A673 (cell line): ENCODE measurements at regions of chr17 and their contacts with region 1.

Region 1: GRCh38 chr17:41738077-41738735 is 3.8 kb upstream of the HAP1 start:
- DNase-seq: peak; percentile 72
- H3K4me3 ChIP-seq: no peak overlapping the region
- H3K27ac ChIP-seq: no peak overlapping the region
- H3K4me1 ChIP-seq: no peaks in the 10 kb centered on the region
- H3K27me3 ChIP-seq: peaks cover 26% of the 10 kb centered on the region
- CTCF ChIP-seq: peak; percentile 78

Region 2: DNA sequence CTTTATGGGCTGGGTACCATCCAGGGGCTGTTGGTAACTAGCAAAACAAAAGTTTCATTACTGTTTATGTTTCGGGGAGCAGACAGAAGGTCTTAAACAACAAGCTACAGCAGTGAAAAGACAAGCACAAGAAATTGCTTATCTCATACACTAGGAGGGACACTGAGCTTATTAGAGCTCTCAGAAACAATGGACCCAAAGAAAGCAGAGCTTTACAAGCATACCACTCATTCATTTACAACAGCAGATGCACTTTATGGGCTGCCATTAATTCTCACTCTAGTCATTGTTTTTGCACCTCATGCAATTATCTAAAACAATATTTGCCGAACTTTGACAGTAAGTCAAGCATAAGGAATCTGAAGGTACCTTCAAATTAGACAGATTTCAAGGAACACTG is 135.7 kb before region 1 on chr17:
- CTCF ChIA-PET with region 1: no interaction called
- POLR2A ChIA-PET with region 1: no interaction called
- intact Hi-C with region 1: no loop called
- DNase-seq: no peak
- H3K4me3 ChIP-seq: no peak overlapping the region
- H3K27ac ChIP-seq: no peak overlapping the region
- H3K4me1 ChIP-seq: no peaks in the 10 kb centered on the region
- H3K27me3 ChIP-seq: no peaks in the 10 kb centered on the region
- CTCF ChIP-seq: no peak

Region 3: GRCh38 chr17:41648411-41649195 is 89.6 kb before region 1 on chr17:
- CTCF ChIA-PET with region 1: no interaction called
- POLR2A ChIA-PET with region 1: no interaction called
- intact Hi-C with region 1: no loop called
- DNase-seq: peak; percentile 82
- H3K4me3 ChIP-seq: peak overlapping the region; percentile 41
- H3K27ac ChIP-seq: peak overlapping the region; percentile 61
- H3K4me1 ChIP-seq: peaks cover 6% of the 10 kb centered on the region
- H3K27me3 ChIP-seq: no peaks in the 10 kb centered on the region
- CTCF ChIP-seq: peak; percentile 78

Region 4: GRCh38 chr17:41801374-41802271 is 63.4 kb after region 1 on chr17:
- CTCF ChIA-PET with region 1: no interaction called
- POLR2A ChIA-PET with region 1: no interaction called
- intact Hi-C with region 1: loop called (anchors 1 kb)
- DNase-seq: peak; percentile 66
- H3K4me3 ChIP-seq: no peak overlapping the region
- H3K27ac ChIP-seq: no peak overlapping the region
- H3K4me1 ChIP-seq: no peaks in the 10 kb centered on the region
- H3K27me3 ChIP-seq: no peaks in the 10 kb centered on the region
- CTCF ChIP-seq: peak; percentile 79

Region 5: DNA sequence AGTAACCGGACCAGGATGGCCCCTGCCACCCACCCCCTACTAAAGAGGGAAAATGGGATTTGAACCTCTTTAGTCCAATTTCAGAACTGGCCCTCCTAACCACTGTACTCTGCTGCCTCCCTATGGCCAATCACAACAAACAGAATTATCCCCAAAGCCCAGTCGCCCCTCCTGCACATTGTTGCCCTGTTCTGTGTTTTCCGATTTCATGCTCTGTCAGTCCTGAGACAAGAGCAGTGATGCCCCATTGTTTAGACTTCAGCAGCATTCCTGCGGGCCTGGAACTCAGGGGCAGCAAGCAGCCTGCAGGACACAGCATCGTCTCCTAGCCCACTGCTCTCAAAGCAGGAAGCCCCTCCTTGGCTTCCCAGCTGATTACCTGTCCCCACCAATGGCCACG is 147.5 kb after region 1 on chr17:
- CTCF ChIA-PET with region 1: no interaction called
- POLR2A ChIA-PET with region 1: no interaction called
- intact Hi-C with region 1: loop called (anchors 10 kb)
- DNase-seq: peak; percentile 6
- H3K4me3 ChIP-seq: no peak overlapping the region
- H3K27ac ChIP-seq: no peak overlapping the region
- H3K4me1 ChIP-seq: no peaks in the 10 kb centered on the region
- H3K27me3 ChIP-seq: no peaks in the 10 kb centered on the region
- CTCF ChIP-seq: 0 out of 2 replicates have a peak, but pooled peaks have one; percentile 17

Region 6: GRCh38 chr17:41959336-41960095 is 221.3 kb after region 1 on chr17:
- CTCF ChIA-PET with region 1: interaction called, 3 read pairs
- POLR2A ChIA-PET with region 1: no interaction called
- intact Hi-C with region 1: loop called (anchors 2 kb)
- DNase-seq: peak; percentile 27
- H3K4me3 ChIP-seq: no peak overlapping the region
- H3K27ac ChIP-seq: no peak overlapping the region
- H3K4me1 ChIP-seq: no peaks in the 10 kb centered on the region
- H3K27me3 ChIP-seq: no peaks in the 10 kb centered on the region
- CTCF ChIP-seq: 0 out of 2 replicates have a peak, but pooled peaks have one; percentile 31